HCT116 (cell line): ENCODE measurements at regions of chr5 and their contacts with region 1.

Region 1: GRCh38 chr5:81301271-81302015 is at the start of gene ZCCHC9:
- DNase-seq: peak; percentile 90
- ATAC-seq: peak; percentile 89
- H3K4me3 ChIP-seq: peak within 1 kb of the TSS; percentile 82 to 90
- H3K27ac ChIP-seq: peak within 1 kb of the TSS; percentile 77
- H3K4me1 ChIP-seq: peaks cover 7 to 22% of the 10 kb centered on the region in 2 experiments; a peak in 2 of 4 replicates
- H3K27me3 ChIP-seq: no peaks in the 10 kb centered on the region
- CTCF ChIP-seq: no peak
- POLR2A ChIP-seq: peak; percentile 96
- RAD21 ChIP-seq: no peak
- total RNA-seq, gene ZCCHC9: 33.7 TPM

Region 2: GRCh38 chr5:81269751-81270686 is 31.4 kb before region 1 on chr5:
- CTCF ChIA-PET with region 1: interaction called, 10 read pairs
- POLR2A ChIA-PET with region 1: no interaction called
- RAD21 ChIA-PET with region 1: no interaction called
- intact Hi-C with region 1: no loop called
- DNase-seq: no peak
- ATAC-seq: peak; percentile 58; the same call in 1 of the 2 replicates
- H3K4me3 ChIP-seq: no peak overlapping the region
- H3K27ac ChIP-seq: peak overlapping the region; percentile 15; the same call in 1 of the 2 replicates
- H3K4me1 ChIP-seq: peaks cover 24 to 26% of the 10 kb centered on the region in 2 experiments
- H3K27me3 ChIP-seq: no peaks in the 10 kb centered on the region
- CTCF ChIP-seq: no peak
- POLR2A ChIP-seq: no peak
- RAD21 ChIP-seq: no peak

Region 3: GRCh38 chr5:82984786-82985735 is 1683.6 kb after region 1 on chr5:
- CTCF ChIA-PET with region 1: no interaction called
- POLR2A ChIA-PET with region 1: no interaction called
- RAD21 ChIA-PET with region 1: no interaction called
- intact Hi-C with region 1: no loop called
- DNase-seq: no peak
- ATAC-seq: peak; percentile 59
- H3K4me3 ChIP-seq: peak overlapping the region; percentile 1 to 26
- H3K27ac ChIP-seq: peak overlapping the region; percentile 2; the same call in 1 of the 2 replicates
- H3K4me1 ChIP-seq: peaks cover 3 to 41% of the 10 kb centered on the region in 2 experiments; a peak in 3 of 4 replicates
- H3K27me3 ChIP-seq: no peaks in the 10 kb centered on the region
- CTCF ChIP-seq: no peak
- POLR2A ChIP-seq: no peak
- RAD21 ChIP-seq: no peak